ENCODE measurements at regions of chr13 and their contacts with region 1.

Region 1: DNA sequence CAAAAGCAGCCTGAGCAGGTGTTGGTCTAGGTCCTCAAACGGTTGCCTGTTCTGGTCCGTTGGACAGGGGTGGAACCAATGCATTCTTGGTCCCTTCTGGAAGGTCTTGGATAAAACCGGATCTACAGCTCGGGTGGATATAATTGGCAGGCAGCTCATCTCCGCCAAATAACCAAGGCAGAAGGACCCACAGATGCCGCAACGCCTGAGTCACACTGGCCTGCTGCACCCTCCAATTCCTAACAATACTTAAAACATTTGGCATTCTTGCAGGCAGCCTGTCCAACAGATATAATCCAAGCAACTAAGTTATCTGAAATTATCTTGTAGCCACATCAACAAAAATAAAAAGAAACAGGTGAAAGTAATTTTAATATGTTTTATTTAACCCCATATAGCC is 59.0 kb upstream of the FGF14 start:
- DNase-seq: no peak
- ATAC-seq: no peak
- H3K4me3 ChIP-seq: no peak overlapping the region
- H3K27ac ChIP-seq: no peak overlapping the region
- H3K4me1 ChIP-seq: no peaks in the 10 kb centered on the region
- H3K27me3 ChIP-seq: no peaks in the 10 kb centered on the region
- CTCF ChIP-seq: no peak

Region 2: GRCh38 chr13:102141625-102142472 is 319.0 kb before region 1 on chr13:
- intact Hi-C with region 1: loop called in 1 of 3 experiments (anchors 5 kb)
- DNase-seq: no peak
- ATAC-seq: peak in 3 of 4 donors; percentile 37 to 54 (median 39)
- H3K4me3 ChIP-seq: no peak overlapping the region
- H3K27ac ChIP-seq: no peak overlapping the region
- H3K4me1 ChIP-seq: no peaks in the 10 kb centered on the region
- H3K27me3 ChIP-seq: no peaks in the 10 kb centered on the region
- CTCF ChIP-seq: peak in 3 of 4 donors; percentile 24 to 68 (median 60)

Region 3: DNA sequence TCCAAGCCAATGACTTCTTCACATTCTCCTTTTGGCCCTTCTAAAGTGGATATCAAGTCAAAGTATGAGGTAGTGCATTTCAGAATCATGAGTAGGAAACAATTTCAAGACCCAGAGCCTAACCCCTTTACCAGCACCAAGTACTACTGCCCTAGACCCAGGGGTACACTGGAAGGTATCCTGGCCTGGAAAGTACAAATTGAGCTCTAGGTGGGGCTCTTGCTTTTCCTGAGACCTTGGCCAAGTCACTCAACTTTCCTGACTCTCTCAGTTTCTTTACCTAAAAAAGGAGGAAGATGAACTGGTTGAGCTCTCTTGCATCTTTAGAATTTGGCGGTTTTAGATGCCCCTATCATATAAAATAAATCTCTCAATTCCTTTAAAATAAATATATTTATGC is 263.6 kb before region 1 on chr13:
- intact Hi-C with region 1: no loop called
- DNase-seq: no peak
- ATAC-seq: peak in 1 of 4 donors; percentile 27
- H3K4me3 ChIP-seq: no peak overlapping the region
- H3K27ac ChIP-seq: no peak overlapping the region
- H3K4me1 ChIP-seq: no peaks in the 10 kb centered on the region
- H3K27me3 ChIP-seq: no peaks in the 10 kb centered on the region
- CTCF ChIP-seq: no peak

Region 4: DNA sequence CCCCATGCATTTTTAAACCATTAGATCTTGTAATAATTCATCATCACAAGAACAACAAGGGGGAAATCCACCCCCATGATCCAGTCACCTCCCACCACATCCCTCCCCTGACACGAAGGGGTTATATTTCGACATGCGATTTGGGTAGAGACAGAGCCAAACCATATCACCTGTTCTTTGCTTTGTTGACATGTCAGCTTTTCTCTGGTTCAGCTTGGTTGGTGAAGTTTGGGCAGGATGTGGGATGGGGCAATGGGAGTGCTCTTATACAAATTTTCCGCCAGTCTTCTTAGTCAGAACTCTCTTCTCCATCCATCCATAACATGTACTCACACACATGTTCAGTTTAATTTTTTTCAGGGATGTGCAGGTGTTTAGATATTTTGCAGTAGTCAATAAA is 148.9 kb after region 1 on chr13:
- intact Hi-C with region 1: no loop called
- DNase-seq: no peak
- ATAC-seq: no peak
- H3K4me3 ChIP-seq: no peak overlapping the region
- H3K27ac ChIP-seq: no peak overlapping the region
- H3K4me1 ChIP-seq: no peaks in the 10 kb centered on the region
- H3K27me3 ChIP-seq: no peaks in the 10 kb centered on the region
- CTCF ChIP-seq: no peak

Measured in pancreas (tissue), 10 donors.